K562 (cell line): ENCODE measurements at regions of chr18 and their contacts with region 1.

Region 1: DNA sequence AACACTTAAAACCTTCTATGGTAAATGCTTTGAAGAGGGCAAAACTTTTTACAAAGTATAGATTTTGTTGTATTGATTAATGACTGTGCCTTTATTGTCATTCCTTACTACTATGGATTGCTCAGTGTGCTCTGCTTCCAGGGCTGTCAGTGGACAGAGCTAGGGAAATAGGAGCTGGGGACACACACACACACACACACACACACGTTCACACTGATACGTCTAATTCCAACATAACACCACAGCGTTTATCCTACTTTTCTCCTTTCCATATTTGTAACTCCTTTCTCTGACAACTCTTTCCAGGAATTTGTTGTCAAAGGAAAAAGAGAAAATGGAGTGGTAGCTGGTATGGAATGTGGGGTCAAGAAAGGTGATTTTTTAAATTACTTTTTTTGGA is 21.8 kb downstream of the WDR7 start:
- DNase-seq: no peak
- ATAC-seq: no peak
- H3K4me3 ChIP-seq: no peak overlapping the region
- H3K27ac ChIP-seq: no peak overlapping the region
- H3K4me1 ChIP-seq: no peaks in the 10 kb centered on the region
- H3K27me3 ChIP-seq: no peaks in the 10 kb centered on the region
- CTCF ChIP-seq: no peak
- EP300 ChIP-seq: no peak
- POLR2A ChIP-seq: no peak
- RAD21 ChIP-seq: no peak

Region 2: GRCh38 chr18:55199291-55199963 is 1473.6 kb before region 1 on chr18:
- CTCF ChIA-PET with region 1: no interaction called
- POLR2A ChIA-PET with region 1: no interaction called
- in situ Hi-C with region 1: no loop called
- intact Hi-C with region 1: no loop called
- DNase-seq: peak in 2 of 4 experiments; percentile 16 to 28
- ATAC-seq: peak; percentile 25; the same call in 1 of the 3 replicates
- H3K4me3 ChIP-seq: no peak overlapping the region
- H3K27ac ChIP-seq: no peak overlapping the region
- H3K4me1 ChIP-seq: peaks cover 0 to 15% of the 10 kb centered on the region in 2 experiments; a peak in 2 of 5 replicates
- H3K27me3 ChIP-seq: no peaks in the 10 kb centered on the region
- CTCF ChIP-seq: no peak
- EP300 ChIP-seq: no peak
- POLR2A ChIP-seq: no peak
- RAD21 ChIP-seq: no peak

Region 3: GRCh38 chr18:56691530-56691929 is 18.5 kb after region 1 on chr18:
- CTCF ChIA-PET with region 1: no interaction called
- POLR2A ChIA-PET with region 1: no interaction called
- in situ Hi-C with region 1: no loop called
- intact Hi-C with region 1: loop called (anchors 1 kb)
- DNase-seq: no peak
- ATAC-seq: no peak
- H3K4me3 ChIP-seq: no peak overlapping the region
- H3K27ac ChIP-seq: no peak overlapping the region
- H3K4me1 ChIP-seq: no peaks in the 10 kb centered on the region
- H3K27me3 ChIP-seq: no peaks in the 10 kb centered on the region
- CTCF ChIP-seq: no peak
- EP300 ChIP-seq: no peak
- POLR2A ChIP-seq: no peak
- RAD21 ChIP-seq: no peak